Activated CD8-positive, alpha-beta T cell treated with anti-CD3 and anti-CD28 coated beads for 36 hours (primary cell): ENCODE measurements at regions of chr2 and their contacts with region 1.

Region 1: GRCh38 chr2:27890146-27890923 is at the starts of genes BABAM2 and RBKS:
- DNase-seq: peak; percentile 96
- ATAC-seq: peak; percentile 90
- H3K4me3 Mint-ChIP-seq: peak within 1 kb of the TSS; percentile 90
- H3K27ac Mint-ChIP-seq: peak within 1 kb of the TSS; percentile 100
- H3K4me1 Mint-ChIP-seq: peaks cover 57% of the 10 kb centered on the region
- H3K27me3 Mint-ChIP-seq: peaks cover 4% of the 10 kb centered on the region
- CTCF ChIP-seq: no peak
- total RNA-seq, gene BABAM2: 66.8 to 68.4 TPM
- total RNA-seq, gene RBKS: 7.2 to 8.9 TPM

Region 2: DNA sequence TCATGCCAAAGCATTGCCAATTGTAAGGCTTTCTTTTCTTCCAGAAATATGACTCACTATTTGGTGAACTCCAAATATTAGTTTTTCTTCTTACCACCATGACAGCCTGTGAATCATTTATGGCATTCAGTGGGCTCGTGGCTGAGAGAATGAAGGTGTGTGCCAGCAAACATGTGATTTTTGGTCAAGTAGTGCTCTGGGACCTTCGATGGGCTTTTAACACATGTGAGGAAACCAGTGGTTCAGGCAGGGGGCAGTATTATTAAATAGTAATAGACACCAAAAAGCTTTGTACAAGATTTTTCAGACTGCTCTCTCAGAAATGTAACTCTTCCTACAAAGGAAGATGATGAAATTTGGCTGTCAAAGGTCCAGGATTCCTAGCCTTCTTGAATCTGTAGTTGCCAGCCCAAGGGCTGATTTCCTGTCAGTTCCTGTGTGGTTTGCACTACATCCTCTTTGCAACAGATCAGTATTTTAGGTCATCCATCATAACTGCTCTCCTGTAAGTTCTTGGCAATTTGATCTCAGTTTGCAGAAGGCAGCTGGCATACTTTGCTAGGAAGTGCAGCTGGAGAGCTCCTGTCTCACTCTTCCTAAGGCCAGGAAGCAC is 64.5 kb after region 1 on chr2:
- CTCF ChIA-PET with region 1: interaction called, 3 read pairs
- POLR2A ChIA-PET with region 1: no interaction called
- intact Hi-C with region 1: loop called (anchors 5 kb)
- DNase-seq: peak; percentile 81
- ATAC-seq: peak; percentile 86
- H3K4me3 Mint-ChIP-seq: peak overlapping the region; percentile 46
- H3K27ac Mint-ChIP-seq: peak overlapping the region; percentile 86
- H3K4me1 Mint-ChIP-seq: peaks cover 84% of the 10 kb centered on the region
- H3K27me3 Mint-ChIP-seq: no peaks in the 10 kb centered on the region
- CTCF ChIP-seq: no peak

Region 3: DNA sequence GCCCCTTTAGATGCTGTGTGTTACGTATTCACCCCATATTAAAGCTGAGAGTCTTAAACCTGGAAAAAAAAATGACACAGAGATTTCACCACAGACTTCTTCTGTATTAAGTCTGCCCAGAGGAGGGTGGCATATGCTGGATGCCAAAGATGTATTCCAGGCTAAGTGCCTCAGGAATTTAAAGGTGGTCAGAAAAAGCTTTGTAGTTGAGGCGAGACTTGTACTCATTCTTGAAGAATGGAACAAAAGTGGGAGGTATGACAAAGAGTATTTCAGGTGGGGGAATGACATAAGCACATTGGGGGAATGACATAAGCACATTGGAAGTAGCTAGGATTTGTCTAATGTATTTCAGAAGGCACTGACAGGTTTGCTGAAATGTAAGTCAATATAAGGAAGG is 98.8 kb after region 1 on chr2:
- CTCF ChIA-PET with region 1: no interaction called
- POLR2A ChIA-PET with region 1: no interaction called
- intact Hi-C with region 1: loop called (anchors 2 kb)
- DNase-seq: no peak
- ATAC-seq: peak; percentile 45
- H3K4me3 Mint-ChIP-seq: no peak overlapping the region
- H3K27ac Mint-ChIP-seq: peak overlapping the region; percentile 80
- H3K4me1 Mint-ChIP-seq: peaks cover 44% of the 10 kb centered on the region
- H3K27me3 Mint-ChIP-seq: no peaks in the 10 kb centered on the region
- CTCF ChIP-seq: no peak